Mammary epithelial cell (primary cell): ENCODE measurements at regions of chr1 and their contacts with region 1.

Region 1: GRCh38 chr1:17451731-17452130 is 12.3 kb upstream of the RCC2 start:
- DNase-seq: no peak
- H3K4me3 ChIP-seq: no peak overlapping the region
- H3K27ac ChIP-seq: no peak overlapping the region
- H3K4me1 ChIP-seq: peaks cover 3% of the 10 kb centered on the region
- H3K27me3 ChIP-seq: no peaks in the 10 kb centered on the region
- CTCF ChIP-seq: no peak

Region 2: GRCh38 chr1:17377334-17377953 is 74.3 kb before region 1 on chr1:
- CTCF ChIA-PET with region 1: no interaction called
- dilution Hi-C with region 1: no loop called
- in situ Hi-C with region 1: no loop called
- intact Hi-C with region 1: no loop called
- DNase-seq: peak; percentile 11
- H3K4me3 ChIP-seq: no peak overlapping the region
- H3K27ac ChIP-seq: no peak overlapping the region
- H3K4me1 ChIP-seq: no peaks in the 10 kb centered on the region
- H3K27me3 ChIP-seq: no peaks in the 10 kb centered on the region
- CTCF ChIP-seq: no peak

Region 3: DNA sequence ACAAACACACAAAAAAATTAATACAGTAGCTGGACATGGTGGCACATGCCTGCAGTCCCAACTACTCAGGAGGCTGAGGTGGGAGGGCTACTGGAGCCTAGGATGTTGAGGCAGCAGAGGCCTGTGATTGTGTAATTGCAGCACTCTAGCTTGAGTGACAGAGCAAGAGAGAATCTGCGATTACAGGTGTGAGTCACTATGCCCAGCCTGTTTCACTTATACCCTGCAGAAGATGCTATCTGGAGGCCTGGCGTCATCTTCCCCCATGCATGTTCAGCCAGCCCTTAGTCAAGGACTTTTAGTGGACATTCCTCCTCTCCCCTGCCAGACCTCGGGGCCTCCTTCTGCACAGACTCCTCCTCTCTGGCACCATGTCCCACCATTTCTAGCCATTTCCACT is 24.0 kb after region 1 on chr1:
- CTCF ChIA-PET with region 1: no interaction called
- dilution Hi-C with region 1: no loop called
- in situ Hi-C with region 1: no loop called
- intact Hi-C with region 1: no loop called
- DNase-seq: peak; percentile 92
- H3K4me3 ChIP-seq: no peak overlapping the region
- H3K27ac ChIP-seq: no peak overlapping the region
- H3K4me1 ChIP-seq: peaks cover 8% of the 10 kb centered on the region
- H3K27me3 ChIP-seq: no peaks in the 10 kb centered on the region
- CTCF ChIP-seq: no peak

Region 4: GRCh38 chr1:17540255-17541001 is 88.7 kb after region 1 on chr1:
- CTCF ChIA-PET with region 1: interaction called, 13 read pairs
- dilution Hi-C with region 1: no loop called
- in situ Hi-C with region 1: no loop called
- intact Hi-C with region 1: no loop called
- DNase-seq: no peak
- H3K4me3 ChIP-seq: peak overlapping the region; percentile 49 to 56 (median 51)
- H3K27ac ChIP-seq: no peak overlapping the region
- H3K4me1 ChIP-seq: peaks cover 3% of the 10 kb centered on the region
- H3K27me3 ChIP-seq: peaks cover 9% of the 10 kb centered on the region
- CTCF ChIP-seq: no peak

Region 5: DNA sequence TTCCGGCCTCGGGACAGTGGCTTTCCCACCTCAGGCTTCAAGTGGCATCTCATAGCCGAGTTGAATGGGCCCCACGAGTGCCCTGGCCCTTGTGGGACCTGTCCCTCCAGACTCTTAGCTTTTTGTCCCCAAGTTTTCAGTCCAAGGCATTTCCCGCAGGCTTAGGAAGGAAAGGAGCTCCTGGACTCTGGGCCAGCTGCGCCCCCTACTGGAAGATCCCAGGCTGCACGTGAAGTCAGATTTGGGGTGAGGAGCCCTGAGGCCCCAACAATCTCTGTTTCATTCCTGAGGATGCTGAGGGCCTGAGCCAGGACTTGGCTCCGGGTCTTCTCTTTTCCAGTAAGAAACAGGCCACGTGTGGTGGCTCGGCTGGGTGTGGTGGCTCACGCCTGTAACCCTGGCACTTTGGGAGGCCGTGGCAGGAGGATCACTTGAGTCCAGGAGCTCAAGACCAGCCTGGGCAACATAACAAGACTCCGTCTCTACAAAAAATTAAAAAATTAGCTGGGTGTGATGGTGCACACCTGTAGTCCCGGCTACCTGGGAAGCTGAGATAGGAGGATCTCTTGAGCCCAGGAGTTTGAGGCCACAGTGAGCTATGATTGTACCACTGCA is 155.2 kb after region 1 on chr1:
- CTCF ChIA-PET with region 1: no interaction called
- dilution Hi-C with region 1: no loop called
- in situ Hi-C with region 1: no loop called
- intact Hi-C with region 1: no loop called
- DNase-seq: peak; percentile 42
- H3K4me3 ChIP-seq: no peak overlapping the region
- H3K27ac ChIP-seq: no peak overlapping the region
- H3K4me1 ChIP-seq: no peaks in the 10 kb centered on the region
- H3K27me3 ChIP-seq: peaks cover 2% of the 10 kb centered on the region
- CTCF ChIP-seq: peak; percentile 90 to 98